ENCODE measurements at regions of chr19 and their contacts with region 1.

Region 1: DNA sequence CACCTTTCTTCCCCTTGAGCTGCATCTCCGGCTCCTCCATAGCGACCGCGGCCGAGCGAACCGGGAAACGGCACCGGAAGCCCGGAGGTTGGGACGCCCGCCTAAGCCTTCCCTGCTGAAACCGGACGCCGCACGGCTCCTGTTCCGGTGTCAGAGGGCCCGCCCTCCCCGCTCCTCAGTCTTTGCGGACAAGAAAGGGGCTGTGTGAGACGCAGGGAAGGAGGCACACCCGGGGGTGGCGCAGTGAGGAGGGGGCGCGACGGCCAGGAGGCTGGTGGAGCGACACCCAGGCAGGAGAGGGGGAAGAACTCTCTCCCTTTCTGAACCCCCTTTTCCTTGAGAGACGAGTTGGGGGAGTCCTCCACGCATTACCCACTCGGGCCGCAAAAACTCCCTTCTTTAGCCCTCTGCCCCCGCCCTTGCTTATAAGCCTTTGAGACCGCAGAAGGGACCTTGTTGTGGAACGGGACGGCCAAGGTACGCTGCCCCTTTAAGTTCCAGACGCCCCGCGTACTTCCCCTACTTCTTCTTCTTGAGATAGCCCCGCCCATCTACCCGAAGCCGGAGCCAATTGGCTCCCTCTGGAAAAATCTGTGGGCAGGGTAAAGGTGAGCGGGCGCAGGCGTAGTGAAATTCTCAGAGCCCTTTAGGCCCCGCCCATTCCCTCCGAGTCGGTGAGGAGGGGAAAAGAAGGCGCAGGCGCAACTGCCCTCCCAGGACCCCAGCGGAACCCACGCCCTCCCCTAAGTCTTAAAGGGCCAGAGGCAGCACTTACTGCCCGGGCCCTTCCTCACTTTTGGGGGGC is at the starts of genes BORCS8 and RFXANK:
- DNase-seq: peak; percentile 98 to 99 (median 98)
- H3K4me3 ChIP-seq: peak within 1 kb of the TSS; percentile 100
- H3K4me3 Mint-ChIP-seq: peak within 1 kb of the TSS; percentile 92 to 99 (median 98)
- H3K27ac ChIP-seq: peak within 1 kb of the TSS; percentile 100
- H3K27ac Mint-ChIP-seq: peak within 1 kb of the TSS; percentile 99 to 100 (median 99)
- H3K4me1 ChIP-seq: peaks cover 25% of the 10 kb centered on the region
- H3K4me1 Mint-ChIP-seq: peaks cover 42 to 66% (median 44%) of the 10 kb centered on the region in 3 donors
- H3K27me3 ChIP-seq: no peaks in the 10 kb centered on the region
- H3K27me3 Mint-ChIP-seq: peaks cover 0 to 3% of the 10 kb centered on the region in 2 donors
- total RNA-seq, gene BORCS8: 37.3 to 40.1 TPM
- total RNA-seq, gene RFXANK: 98.4 to 101 TPM

Region 2: DNA sequence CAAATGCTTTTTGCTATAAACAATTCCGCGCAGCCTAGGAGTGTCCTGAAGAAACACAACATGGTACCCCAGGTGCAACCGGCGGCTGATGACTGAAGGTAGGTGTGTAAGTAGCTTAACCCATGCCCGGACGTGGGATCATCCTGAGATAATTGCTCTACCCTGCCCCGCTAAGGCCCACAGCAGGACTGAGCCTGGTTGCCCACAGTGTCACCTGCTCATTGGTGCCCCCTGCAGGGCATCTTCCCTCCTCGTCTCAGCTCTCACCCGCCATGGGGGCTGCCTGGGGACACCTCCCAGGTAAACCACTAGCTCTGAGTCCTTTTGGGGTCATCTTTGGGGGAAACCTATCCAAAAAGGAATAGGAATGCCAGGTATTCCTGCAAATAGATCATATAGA is 76.3 kb before region 1 on chr19:
- CTCF ChIA-PET with region 1: no interaction called
- POLR2A ChIA-PET with region 1: no interaction called
- DNase-seq: peak; percentile 28 to 63 (median 33)
- H3K4me3 ChIP-seq: no peak overlapping the region
- H3K4me3 Mint-ChIP-seq: no peak overlapping the region
- H3K27ac ChIP-seq: no peak overlapping the region
- H3K27ac Mint-ChIP-seq: peak overlapping the region in 1 of 8 donors; percentile 42
- H3K4me1 ChIP-seq: no peaks in the 10 kb centered on the region
- H3K4me1 Mint-ChIP-seq: peaks cover 0 to 16% (median 5%) of the 10 kb centered on the region in 3 donors
- H3K27me3 ChIP-seq: no peaks in the 10 kb centered on the region
- H3K27me3 Mint-ChIP-seq: no peaks in the 10 kb centered on the region

Region 3: DNA sequence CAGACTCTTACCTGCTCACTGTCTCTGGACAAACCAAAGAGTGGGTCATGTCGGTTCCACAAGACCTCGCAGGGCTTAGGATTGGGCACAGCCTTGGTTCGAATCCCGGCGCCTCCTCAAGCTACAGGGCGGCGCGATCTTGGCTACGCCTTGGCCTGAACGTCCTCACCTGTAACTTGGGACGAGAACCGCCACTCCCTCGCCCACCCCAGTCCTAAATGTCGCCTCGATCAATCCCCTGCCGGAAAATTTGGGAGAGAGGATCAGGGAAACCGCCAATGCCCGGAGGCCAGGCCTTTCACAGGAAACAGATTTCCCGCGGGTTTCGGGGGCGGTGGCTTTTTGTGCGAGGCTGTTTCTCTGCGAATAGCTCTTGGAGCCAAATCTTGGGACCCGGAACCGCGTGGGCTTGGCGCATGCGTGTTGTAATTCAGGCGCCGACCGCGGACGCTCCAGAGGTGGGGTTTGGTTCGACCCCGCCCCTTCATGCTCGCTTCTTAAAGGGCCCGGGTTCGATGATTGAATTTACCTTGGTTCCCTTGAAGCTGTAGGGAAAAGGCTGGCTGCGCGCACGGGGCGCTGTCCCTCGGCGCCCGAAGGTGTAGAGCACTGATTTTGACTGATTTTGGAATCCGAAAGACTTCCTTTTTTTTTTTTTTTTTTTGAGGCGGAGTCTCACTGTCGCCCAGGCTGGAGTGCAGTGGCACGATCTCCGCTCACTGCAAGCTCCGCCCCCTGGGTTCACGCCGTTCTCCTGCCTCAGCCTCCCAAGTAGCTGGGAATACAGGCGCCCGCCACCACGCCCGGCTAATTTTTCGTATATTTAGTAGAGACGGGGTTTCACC is 11.0 kb after region 1 on chr19 and contains the start of gene NR2C2AP:
- CTCF ChIA-PET with region 1: interaction called, 9 read pairs
- POLR2A ChIA-PET with region 1: interaction called, 36 read pairs
- DNase-seq: peak; percentile 88 to 92 (median 88)
- H3K4me3 ChIP-seq: peak within 1 kb of the TSS; percentile 75
- H3K4me3 Mint-ChIP-seq: peak within 1 kb of the TSS; percentile 91 to 98 (median 94)
- H3K27ac ChIP-seq: peak within 1 kb of the TSS; percentile 72
- H3K27ac Mint-ChIP-seq: peak within 1 kb of the TSS; percentile 88 to 97 (median 92)
- H3K4me1 ChIP-seq: peaks cover 27% of the 10 kb centered on the region
- H3K4me1 Mint-ChIP-seq: peaks cover 28 to 35% (median 30%) of the 10 kb centered on the region in 3 donors
- H3K27me3 ChIP-seq: no peaks in the 10 kb centered on the region
- H3K27me3 Mint-ChIP-seq: peaks cover 4 to 5% of the 10 kb centered on the region in 2 donors
- total RNA-seq, gene NR2C2AP: 59.5 to 60.7 TPM

Region 4: DNA sequence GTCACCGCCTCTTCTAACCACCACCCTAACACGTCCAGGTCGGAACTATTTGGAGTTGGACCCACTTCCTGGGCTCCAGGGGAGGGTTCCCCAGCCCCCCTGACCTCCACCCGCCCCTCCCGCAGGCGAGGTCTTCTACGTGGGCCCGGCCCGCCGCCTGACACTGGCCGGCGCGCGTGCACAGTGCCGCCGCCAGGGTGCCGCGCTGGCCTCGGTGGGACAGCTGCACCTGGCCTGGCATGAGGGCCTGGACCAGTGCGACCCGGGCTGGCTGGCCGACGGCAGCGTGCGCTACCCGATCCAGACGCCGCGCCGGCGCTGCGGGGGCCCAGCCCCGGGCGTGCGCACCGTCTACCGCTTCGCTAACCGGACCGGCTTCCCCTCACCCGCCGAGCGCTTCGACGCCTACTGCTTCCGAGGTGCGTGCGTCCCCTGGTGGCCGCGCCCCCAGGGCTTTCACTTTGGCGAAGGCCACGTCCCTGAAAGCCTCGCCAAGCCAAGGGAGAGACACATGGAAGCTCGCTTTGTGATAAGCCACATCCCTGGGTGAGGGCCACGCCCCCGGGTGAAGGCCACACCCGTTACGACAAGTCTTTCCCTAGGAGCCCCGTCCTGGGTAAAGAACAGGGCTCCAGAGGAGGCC is 32.7 kb after region 1 on chr19:
- CTCF ChIA-PET with region 1: interaction called, 17 read pairs
- POLR2A ChIA-PET with region 1: no interaction called
- DNase-seq: peak; percentile 63 to 86 (median 67)
- H3K4me3 ChIP-seq: peak overlapping the region; percentile 65
- H3K4me3 Mint-ChIP-seq: peak overlapping the region; percentile 61 to 88 (median 74)
- H3K27ac ChIP-seq: peak overlapping the region; percentile 31
- H3K27ac Mint-ChIP-seq: peak overlapping the region in 1 of 8 donors; percentile 72
- H3K4me1 ChIP-seq: peaks cover 9% of the 10 kb centered on the region
- H3K4me1 Mint-ChIP-seq: peaks cover 0 to 7% (median 3%) of the 10 kb centered on the region in 3 donors
- H3K27me3 ChIP-seq: no peaks in the 10 kb centered on the region
- H3K27me3 Mint-ChIP-seq: peaks cover 3 to 23% of the 10 kb centered on the region in 2 donors